ENCODE measurements at regions of chr19 and their contacts with region 1.

Region 1: GRCh38 chr19:1241417-1242095 is at the start of gene ATP5F1D:
- DNase-seq: peak; percentile 98
- H3K4me3 ChIP-seq: peak within 1 kb of the TSS; percentile 70 to 85 (median 79)
- H3K27ac ChIP-seq: peak within 1 kb of the TSS; percentile 93 to 100 (median 98)
- H3K4me1 ChIP-seq: peaks cover 0 to 80% (median 77%) of the 10 kb centered on the region in 4 donors
- H3K27me3 ChIP-seq: peaks cover 6 to 8% (median 7%) of the 10 kb centered on the region in 3 donors
- CTCF ChIP-seq: no peak
- EP300 ChIP-seq: peak in 1 of 4 donors; percentile 83
- POLR2A ChIP-seq: peak in 1 of 2 donors; percentile 33
- total RNA-seq, gene ATP5F1D: 74.7 to 112 (median 104) TPM

Region 2: DNA sequence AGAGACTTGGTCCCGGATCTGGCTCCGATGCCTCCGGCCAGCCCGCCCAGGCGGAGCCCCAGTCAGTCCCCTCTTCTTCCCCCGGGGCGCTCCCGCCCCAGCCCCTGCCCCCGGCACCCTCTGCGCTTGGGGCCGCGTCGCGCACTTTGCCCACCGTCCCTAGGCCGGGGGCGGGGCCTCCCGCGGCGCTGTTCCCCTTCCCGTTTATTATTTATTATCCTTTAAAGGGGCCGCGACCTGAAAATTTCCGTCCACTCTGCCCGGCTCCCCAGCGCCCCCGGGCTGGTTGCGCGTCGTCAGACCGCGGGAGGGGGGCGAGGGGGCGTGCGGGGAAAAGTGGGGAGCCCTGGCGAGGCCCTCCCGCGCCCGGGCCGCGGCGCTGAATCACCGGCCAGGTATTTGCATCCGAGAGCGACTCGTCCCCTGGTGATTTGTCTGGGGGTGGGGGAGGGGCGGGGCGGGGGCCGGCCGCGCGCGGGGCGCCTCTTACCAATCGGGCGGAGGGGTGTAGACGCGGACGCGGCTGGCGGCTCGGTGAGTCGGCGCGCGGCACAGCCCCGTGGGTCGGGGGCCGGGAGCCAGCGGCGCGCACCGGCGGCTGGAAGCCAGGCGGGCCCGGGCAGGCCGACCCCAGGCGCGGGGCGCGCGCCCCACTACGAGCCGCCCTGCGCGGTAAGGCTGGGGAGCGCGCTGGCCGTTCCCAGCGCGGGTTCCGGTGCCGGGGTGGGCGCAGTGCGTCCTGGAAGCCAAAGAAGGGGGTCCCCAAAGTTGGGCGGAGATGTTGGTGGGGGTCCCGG is 315.8 kb before region 1 on chr19 and contains the start of gene ARID3A:
- intact Hi-C with region 1: loop called (anchors 2 kb)
- DNase-seq: peak; percentile 92
- H3K4me3 ChIP-seq: peak within 1 kb of the TSS; percentile 85 to 98 (median 91)
- H3K27ac ChIP-seq: peak within 1 kb of the TSS; percentile 83 to 93 (median 86)
- H3K4me1 ChIP-seq: peaks cover 0 to 43% (median 28%) of the 10 kb centered on the region in 4 donors
- H3K27me3 ChIP-seq: peaks cover 3 to 8% (median 8%) of the 10 kb centered on the region in 3 donors
- CTCF ChIP-seq: no peak
- EP300 ChIP-seq: no peak
- POLR2A ChIP-seq: no peak
- total RNA-seq, gene ARID3A: 3.1 to 11.6 (median 4.3) TPM

Region 3: GRCh38 chr19:958967-959820 is 282.4 kb before region 1 on chr19:
- intact Hi-C with region 1: no loop called
- DNase-seq: no peak
- H3K4me3 ChIP-seq: no peak overlapping the region
- H3K27ac ChIP-seq: no peak overlapping the region
- H3K4me1 ChIP-seq: peaks cover 0 to 13% (median 8%) of the 10 kb centered on the region in 4 donors
- H3K27me3 ChIP-seq: no peaks in the 10 kb centered on the region
- CTCF ChIP-seq: no peak
- EP300 ChIP-seq: no peak
- POLR2A ChIP-seq: no peak

Region 4: GRCh38 chr19:1103708-1104310 is 137.7 kb before region 1 on chr19 and contains the start of gene GPX4:
- intact Hi-C with region 1: loop called (anchors 2 kb)
- DNase-seq: peak; percentile 100
- H3K4me3 ChIP-seq: peak within 1 kb of the TSS; percentile 77 to 98 (median 94)
- H3K27ac ChIP-seq: peak within 1 kb of the TSS; percentile 98 to 100 (median 100)
- H3K4me1 ChIP-seq: peaks cover 0 to 53% (median 50%) of the 10 kb centered on the region in 4 donors
- H3K27me3 ChIP-seq: no peaks in the 10 kb centered on the region
- CTCF ChIP-seq: no peak
- EP300 ChIP-seq: peak in 1 of 4 donors; percentile 41
- POLR2A ChIP-seq: peak; percentile 82 to 88
- total RNA-seq, gene GPX4: 269 to 433 (median 371) TPM

Region 5: GRCh38 chr19:1173845-1174809 is 67.4 kb before region 1 on chr19 and contains the start of gene SBNO2:
- intact Hi-C with region 1: loop called (anchors 5 kb)
- DNase-seq: peak; percentile 96
- H3K4me3 ChIP-seq: peak within 1 kb of the TSS; percentile 49 to 97 (median 87)
- H3K27ac ChIP-seq: peak within 1 kb of the TSS; percentile 82 to 99 (median 96)
- H3K4me1 ChIP-seq: peaks cover 0 to 50% (median 40%) of the 10 kb centered on the region in 4 donors
- H3K27me3 ChIP-seq: no peaks in the 10 kb centered on the region
- CTCF ChIP-seq: no peak
- EP300 ChIP-seq: no peak
- POLR2A ChIP-seq: peak; percentile 20 to 28
- total RNA-seq, gene SBNO2: 6.8 to 91.9 (median 14.7) TPM

Region 6: GRCh38 chr19:1269065-1269477 is 27.5 kb after region 1 on chr19 and contains the start of gene CIRBP:
- intact Hi-C with region 1: loop called (anchors 1 kb)
- DNase-seq: peak; percentile 100
- H3K4me3 ChIP-seq: peak within 1 kb of the TSS; percentile 38 to 94 (median 74)
- H3K27ac ChIP-seq: peak within 1 kb of the TSS; percentile 94 to 100 (median 97)
- H3K4me1 ChIP-seq: peaks cover 0 to 84% (median 81%) of the 10 kb centered on the region in 4 donors
- H3K27me3 ChIP-seq: no peaks in the 10 kb centered on the region
- CTCF ChIP-seq: no peak
- EP300 ChIP-seq: peak in 1 of 4 donors; percentile 62
- POLR2A ChIP-seq: peak; percentile 94 to 95
- total RNA-seq, gene CIRBP: 602 to 1,004 (median 791) TPM

Region 7: DNA sequence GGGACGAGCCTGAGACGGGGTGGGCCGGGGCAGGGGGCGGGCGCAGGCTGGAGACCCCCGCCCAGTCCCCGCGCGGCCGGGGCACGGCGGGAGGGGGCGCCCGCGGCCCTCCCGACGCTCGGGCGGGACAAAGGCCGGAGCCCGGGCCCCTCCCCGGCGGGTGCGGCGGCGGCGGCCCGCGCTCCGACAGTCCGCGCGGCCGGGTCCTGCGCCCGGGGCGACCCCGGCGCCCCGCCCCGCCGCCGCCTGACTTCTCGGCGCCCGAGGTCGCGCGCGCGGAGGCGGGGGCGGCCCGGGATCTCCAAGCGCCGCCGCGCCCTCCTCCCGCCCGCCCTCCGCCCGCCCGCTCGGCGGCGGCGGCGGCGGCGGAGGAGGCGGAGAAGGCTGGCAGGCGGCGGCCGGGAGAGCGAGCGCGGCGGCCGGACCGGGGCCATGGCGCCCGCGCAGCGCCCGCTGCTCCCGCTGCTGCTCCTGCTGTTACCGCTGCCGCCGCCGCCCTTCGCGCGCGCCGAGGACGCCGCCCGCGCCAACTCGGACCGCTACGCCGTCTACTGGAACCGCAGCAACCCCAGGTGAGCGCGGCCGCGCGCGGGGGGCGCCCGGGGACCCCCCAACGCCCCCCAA is 44.3 kb after region 1 on chr19 and contains the start of gene EFNA2:
- intact Hi-C with region 1: no loop called
- DNase-seq: no peak
- H3K4me3 ChIP-seq: peak within 1 kb of the TSS in 2 of 4 donors; percentile 8 to 10
- H3K27ac ChIP-seq: no peak within 1 kb of the TSS
- H3K4me1 ChIP-seq: peaks cover 0 to 10% (median 5%) of the 10 kb centered on the region in 4 donors
- H3K27me3 ChIP-seq: peaks cover 50 to 79% (median 73%) of the 10 kb centered on the region in 3 donors
- CTCF ChIP-seq: no peak
- EP300 ChIP-seq: no peak
- POLR2A ChIP-seq: no peak
- total RNA-seq, gene EFNA2: not detected

Measured in sigmoid colon (tissue), 7 donors.